Endothelial cell of umbilical vein (primary cell): ENCODE measurements at regions of chr19 and their contacts with region 1.

Region 1: GRCh38 chr19:29665215-29665825 is at the start of gene PLEKHF1:
- DNase-seq: peak; percentile 83
- H3K4me3 ChIP-seq: peak within 1 kb of the TSS; percentile 55 to 81 (median 64)
- H3K27ac ChIP-seq: no peak within 1 kb of the TSS
- H3K4me1 ChIP-seq: peaks cover 29% of the 10 kb centered on the region
- H3K27me3 ChIP-seq: no peaks in the 10 kb centered on the region
- CTCF ChIP-seq: no peak
- POLR2A ChIP-seq: peak; percentile 37
- total RNA-seq, gene PLEKHF1: 4.0 and 5.5 TPM in 2 replicates

Region 2: DNA sequence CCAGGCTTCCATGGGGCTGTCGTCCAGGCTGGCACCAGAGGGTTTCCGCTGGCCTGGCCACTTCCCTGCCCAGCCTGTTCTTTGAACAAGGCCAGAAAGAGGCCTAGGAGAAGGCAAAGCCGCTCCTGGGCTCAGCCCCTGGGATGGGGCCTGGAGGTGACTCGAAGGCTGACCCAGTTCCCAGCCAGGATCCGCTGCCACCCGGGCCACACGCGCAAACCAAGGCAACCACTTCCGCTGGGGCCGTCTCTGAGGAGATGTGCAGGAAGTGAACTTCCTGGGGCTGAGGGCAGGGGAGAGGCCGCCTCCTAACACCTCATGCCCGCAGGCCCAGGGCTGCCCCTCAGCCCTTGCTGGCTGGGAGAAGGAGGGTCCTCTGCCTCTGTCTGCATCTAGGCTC is 15.1 kb after region 1 on chr19:
- CTCF ChIA-PET with region 1: interaction called, 3 read pairs
- POLR2A ChIA-PET with region 1: no interaction called
- dilution Hi-C with region 1: no loop called
- intact Hi-C with region 1: loop called (anchors 1 kb)
- DNase-seq: no peak
- H3K4me3 ChIP-seq: no peak overlapping the region
- H3K27ac ChIP-seq: no peak overlapping the region
- H3K4me1 ChIP-seq: peaks cover 6% of the 10 kb centered on the region
- H3K27me3 ChIP-seq: no peaks in the 10 kb centered on the region
- CTCF ChIP-seq: no peak
- POLR2A ChIP-seq: no peak

Region 3: DNA sequence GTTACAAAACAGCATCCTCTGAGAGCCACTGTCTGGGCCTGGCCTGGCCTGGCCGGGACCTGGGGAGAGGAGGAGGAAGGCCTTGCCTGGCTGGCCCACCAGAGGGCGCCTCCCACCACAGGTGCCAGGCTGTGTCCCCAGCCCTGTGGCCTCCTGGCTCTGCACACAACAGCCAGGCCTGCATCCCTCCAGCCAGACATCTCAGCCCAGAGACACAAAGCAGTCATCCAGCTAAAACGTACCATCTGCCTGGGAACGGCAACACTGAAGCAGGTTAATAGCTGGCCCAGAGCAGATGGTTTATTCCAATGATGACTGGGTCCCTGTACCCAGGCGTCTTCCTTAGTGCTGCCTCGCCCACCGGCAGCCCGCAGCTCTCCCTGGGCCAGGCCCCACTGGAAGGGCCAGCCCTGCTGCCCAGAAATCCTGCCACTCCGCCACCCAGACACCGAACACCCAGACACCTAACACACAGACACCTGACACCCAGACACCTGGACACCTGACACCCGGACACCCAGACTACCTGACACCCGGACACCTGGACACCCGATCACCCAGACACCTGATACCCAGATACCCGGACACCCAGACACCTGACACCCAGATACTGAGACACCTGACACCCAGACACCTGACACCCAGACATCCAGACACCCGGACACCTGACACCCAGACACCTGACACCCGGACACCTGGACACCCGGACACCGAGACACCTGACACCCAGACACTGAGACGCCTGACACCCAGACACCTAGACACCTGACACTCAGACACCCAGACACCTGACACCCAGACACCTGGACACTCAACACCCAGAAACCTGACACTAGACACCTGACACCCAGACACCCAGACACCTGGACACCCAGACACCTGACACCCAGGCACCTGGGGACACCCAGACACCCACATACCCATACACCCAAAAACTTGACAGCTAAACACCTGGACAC is 29.6 kb after region 1 on chr19:
- CTCF ChIA-PET with region 1: interaction called, 5 read pairs
- POLR2A ChIA-PET with region 1: no interaction called
- dilution Hi-C with region 1: no loop called
- intact Hi-C with region 1: loop called (anchors 2 kb)
- DNase-seq: peak; percentile 51
- H3K4me3 ChIP-seq: no peak overlapping the region
- H3K27ac ChIP-seq: no peak overlapping the region
- H3K4me1 ChIP-seq: no peaks in the 10 kb centered on the region
- H3K27me3 ChIP-seq: no peaks in the 10 kb centered on the region
- CTCF ChIP-seq: peak; percentile 76 to 96
- POLR2A ChIP-seq: no peak